Right lobe of liver (tissue), 6 donors: ENCODE measurements at regions of chr5 and their contacts with region 1.

Region 1: GRCh38 chr5:179495906-179496455 is 54.4 kb upstream of the RUFY1 start:
- DNase-seq: no peak
- ATAC-seq: peak in 3 of 4 donors; percentile 14 to 27 (median 17)
- H3K4me3 ChIP-seq: no peak overlapping the region
- H3K27ac ChIP-seq: no peak overlapping the region
- H3K4me1 ChIP-seq: no peaks in the 10 kb centered on the region
- H3K27me3 ChIP-seq: no peaks in the 10 kb centered on the region
- CTCF ChIP-seq: no peak
- POLR2A ChIP-seq: no peak

Region 2: GRCh38 chr5:179166886-179167841 is 328.8 kb before region 1 on chr5:
- intact Hi-C with region 1: loop called (anchors 5 kb)
- DNase-seq: peak; percentile 52 to 54 (median 54)
- ATAC-seq: peak; percentile 67 to 86 (median 76)
- H3K4me3 ChIP-seq: peak overlapping the region in 1 of 3 donors; percentile 1
- H3K27ac ChIP-seq: no peak overlapping the region
- H3K4me1 ChIP-seq: peaks cover 0 to 8% (median 0%) of the 10 kb centered on the region in 4 donors
- H3K27me3 ChIP-seq: no peaks in the 10 kb centered on the region
- CTCF ChIP-seq: peak; percentile 74 to 98 (median 88)
- POLR2A ChIP-seq: no peak